ENCODE measurements at regions of chr5 and their contacts with region 1.

Region 1: GRCh38 chr5:32379421-32379820 is 65.1 kb downstream of the ZFR start:
- DNase-seq: no peak
- ATAC-seq: no peak
- H3K4me3 ChIP-seq: no peak overlapping the region
- H3K4me3 Mint-ChIP-seq: no peak overlapping the region
- H3K27ac ChIP-seq: no peak overlapping the region
- H3K27ac Mint-ChIP-seq: no peak overlapping the region
- H3K4me1 ChIP-seq: no peaks in the 10 kb centered on the region
- H3K4me1 Mint-ChIP-seq: no peaks in the 10 kb centered on the region
- H3K27me3 ChIP-seq: no peaks in the 10 kb centered on the region
- H3K27me3 Mint-ChIP-seq: no peaks in the 10 kb centered on the region
- CTCF ChIP-seq: no peak

Region 2: DNA sequence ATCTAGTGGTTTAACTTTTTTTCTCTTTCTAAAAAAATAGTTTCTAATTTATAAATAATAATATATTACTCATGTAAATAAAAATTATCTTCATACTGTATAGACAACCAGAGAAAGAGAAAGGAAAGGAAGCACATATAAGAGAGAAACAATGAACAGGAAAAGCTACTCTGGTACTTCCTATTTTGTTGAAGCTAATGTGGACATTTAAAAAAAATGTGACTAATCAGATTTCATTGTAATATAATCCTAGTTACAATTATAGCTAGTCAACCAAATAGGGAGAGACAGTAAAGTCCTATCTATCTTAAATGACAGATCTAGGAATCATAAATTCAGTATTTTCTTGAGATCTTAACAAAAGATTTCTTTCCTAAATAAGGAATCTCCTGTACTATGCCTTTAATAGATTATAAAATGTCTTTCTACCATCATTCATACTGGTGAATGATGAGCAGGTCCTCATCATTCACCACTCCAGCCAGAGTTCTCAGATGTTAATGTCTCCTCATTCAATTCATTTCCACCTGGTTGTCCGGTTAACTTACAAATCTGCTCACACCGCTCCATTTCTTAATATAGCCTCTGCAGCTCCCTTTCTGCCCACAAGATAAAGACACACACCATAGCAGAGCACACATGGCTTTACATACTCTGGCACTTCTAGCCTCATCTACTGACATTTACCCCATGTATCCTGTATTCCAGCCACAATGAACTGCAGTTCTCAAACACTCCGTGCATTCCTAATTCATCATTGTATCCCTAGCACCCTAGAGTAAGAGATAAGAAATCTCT is 34.2 kb after region 1 on chr5:
- CTCF ChIA-PET with region 1: no interaction called
- POLR2A ChIA-PET with region 1: no interaction called
- intact Hi-C with region 1: loop called in 1 of 2 experiments (anchors 5 kb)
- DNase-seq: no peak
- ATAC-seq: no peak
- H3K4me3 ChIP-seq: no peak overlapping the region
- H3K4me3 Mint-ChIP-seq: no peak overlapping the region
- H3K27ac ChIP-seq: no peak overlapping the region
- H3K27ac Mint-ChIP-seq: no peak overlapping the region
- H3K4me1 ChIP-seq: no peaks in the 10 kb centered on the region
- H3K4me1 Mint-ChIP-seq: peaks cover 18% of the 10 kb centered on the region
- H3K27me3 ChIP-seq: no peaks in the 10 kb centered on the region
- H3K27me3 Mint-ChIP-seq: no peaks in the 10 kb centered on the region
- CTCF ChIP-seq: no peak

Region 3: DNA sequence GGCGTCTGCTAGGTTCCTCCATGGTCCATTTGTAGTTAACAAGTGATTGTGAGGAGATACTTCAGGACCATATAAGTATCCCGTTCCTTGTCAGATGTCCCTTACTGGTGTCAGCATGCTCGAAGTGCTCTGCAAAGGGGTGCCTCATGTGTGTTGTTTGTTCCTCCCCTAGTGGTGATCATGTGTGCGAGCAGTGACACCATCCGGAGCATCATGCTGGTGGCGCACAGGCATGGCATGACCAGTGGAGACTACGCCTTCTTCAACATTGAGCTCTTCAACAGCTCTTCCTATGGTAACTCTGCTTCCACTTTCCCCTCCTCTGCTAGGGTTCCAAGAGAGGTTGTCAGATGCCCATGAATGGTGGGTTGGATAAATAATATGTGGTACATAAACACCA is 345.1 kb after region 1 on chr5:
- CTCF ChIA-PET with region 1: no interaction called
- POLR2A ChIA-PET with region 1: no interaction called
- intact Hi-C with region 1: no loop called
- DNase-seq: no peak
- ATAC-seq: no peak
- H3K4me3 ChIP-seq: no peak overlapping the region
- H3K4me3 Mint-ChIP-seq: no peak overlapping the region
- H3K27ac ChIP-seq: no peak overlapping the region
- H3K27ac Mint-ChIP-seq: no peak overlapping the region
- H3K4me1 ChIP-seq: no peaks in the 10 kb centered on the region
- H3K4me1 Mint-ChIP-seq: peaks cover 4% of the 10 kb centered on the region
- H3K27me3 ChIP-seq: no peaks in the 10 kb centered on the region
- H3K27me3 Mint-ChIP-seq: peaks cover 8% of the 10 kb centered on the region
- CTCF ChIP-seq: no peak